ENCODE measurements at regions of chr20 and their contacts with region 1.

Region 1: GRCh38 chr20:13089950-13090469 is 81.2 kb downstream of the SPTLC3 start:
- DNase-seq: peak; percentile 99
- ATAC-seq: peak; percentile 99
- H3K4me3 ChIP-seq: peak overlapping the region in 1 of 3 experiments; percentile 1; a peak in 1 of 6 replicates
- H3K27ac ChIP-seq: peak overlapping the region; percentile 75
- H3K4me1 ChIP-seq: peaks cover 67% of the 10 kb centered on the region
- H3K27me3 ChIP-seq: no peaks in the 10 kb centered on the region
- CTCF ChIP-seq: no peak
- EP300 ChIP-seq: peak; percentile 87 to 99; a peak in 3 of 4 replicates
- POLR2A ChIP-seq: no peak
- RAD21 ChIP-seq: peak; percentile 22; the same call in 1 of the 2 replicates

Region 2: DNA sequence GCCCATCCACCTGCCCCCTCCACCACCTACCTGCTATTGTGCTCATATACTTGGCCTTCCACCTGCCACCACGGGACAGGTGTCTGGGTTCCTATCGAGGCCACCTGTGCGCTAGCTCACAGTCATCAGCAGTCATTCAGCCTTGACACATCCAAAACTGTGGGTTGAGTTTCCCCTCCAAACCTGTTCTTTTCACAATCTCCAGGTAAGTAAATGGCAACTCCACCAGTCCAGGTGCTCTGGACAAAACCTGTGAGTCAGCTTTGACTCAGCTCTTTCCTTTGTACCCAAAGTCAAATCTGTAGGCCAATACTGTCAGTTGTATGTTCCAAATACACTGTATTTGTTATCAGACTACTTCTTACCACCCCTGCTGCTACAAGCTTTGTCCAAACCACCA is 28.6 kb before region 1 on chr20:
- CTCF ChIA-PET with region 1: no interaction called
- POLR2A ChIA-PET with region 1: interaction called, 25 read pairs
- in situ Hi-C with region 1: no loop called
- intact Hi-C with region 1: loop called (anchors 2 kb)
- DNase-seq: no peak
- ATAC-seq: no peak
- H3K4me3 ChIP-seq: no peak overlapping the region
- H3K27ac ChIP-seq: peak overlapping the region; percentile 5
- H3K4me1 ChIP-seq: peaks cover 54% of the 10 kb centered on the region
- H3K27me3 ChIP-seq: no peaks in the 10 kb centered on the region
- CTCF ChIP-seq: no peak
- EP300 ChIP-seq: no peak
- POLR2A ChIP-seq: no peak
- RAD21 ChIP-seq: no peak